Activated CD4-positive, alpha-beta T cell treated with anti-CD3 and anti-CD28 coated beads for 36 hours (primary cell): ENCODE measurements at regions of chr18 and their contacts with region 1.

Region 1: DNA sequence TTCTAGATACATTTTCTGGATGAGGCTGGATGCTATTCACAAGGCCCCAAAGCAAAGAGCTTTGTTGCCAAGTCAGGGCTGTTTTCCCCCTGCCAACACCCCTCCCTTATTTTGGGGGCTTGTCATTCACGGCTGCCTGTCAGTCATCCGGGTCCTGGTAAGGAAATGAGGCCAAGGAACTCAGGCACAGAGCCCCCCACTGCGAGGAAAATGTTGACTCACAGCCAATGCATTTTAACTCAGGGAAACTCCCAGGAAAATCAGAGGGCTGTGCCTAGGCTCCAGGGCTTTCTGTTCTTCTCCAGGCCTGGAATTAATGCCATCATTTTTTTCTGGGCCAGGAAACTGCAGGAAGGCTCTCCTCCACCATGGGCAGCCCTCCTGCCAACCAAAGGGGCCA is 241.1 kb downstream of the SMAD2 start:
- DNase-seq: no peak
- ATAC-seq: no peak
- H3K4me3 Mint-ChIP-seq: no peak overlapping the region
- H3K27ac Mint-ChIP-seq: no peak overlapping the region
- H3K4me1 Mint-ChIP-seq: no peaks in the 10 kb centered on the region
- H3K27me3 Mint-ChIP-seq: peaks cover 6% of the 10 kb centered on the region

Region 2: GRCh38 chr18:47381975-47382570 is 307.3 kb before region 1 on chr18:
- CTCF ChIA-PET with region 1: no interaction called
- POLR2A ChIA-PET with region 1: no interaction called
- intact Hi-C with region 1: loop called in 1 of 2 experiments (anchors 1 kb)
- DNase-seq: no peak
- ATAC-seq: no peak
- H3K4me3 Mint-ChIP-seq: no peak overlapping the region
- H3K27ac Mint-ChIP-seq: no peak overlapping the region
- H3K4me1 Mint-ChIP-seq: no peaks in the 10 kb centered on the region
- H3K27me3 Mint-ChIP-seq: peaks cover 5% of the 10 kb centered on the region

Region 3: DNA sequence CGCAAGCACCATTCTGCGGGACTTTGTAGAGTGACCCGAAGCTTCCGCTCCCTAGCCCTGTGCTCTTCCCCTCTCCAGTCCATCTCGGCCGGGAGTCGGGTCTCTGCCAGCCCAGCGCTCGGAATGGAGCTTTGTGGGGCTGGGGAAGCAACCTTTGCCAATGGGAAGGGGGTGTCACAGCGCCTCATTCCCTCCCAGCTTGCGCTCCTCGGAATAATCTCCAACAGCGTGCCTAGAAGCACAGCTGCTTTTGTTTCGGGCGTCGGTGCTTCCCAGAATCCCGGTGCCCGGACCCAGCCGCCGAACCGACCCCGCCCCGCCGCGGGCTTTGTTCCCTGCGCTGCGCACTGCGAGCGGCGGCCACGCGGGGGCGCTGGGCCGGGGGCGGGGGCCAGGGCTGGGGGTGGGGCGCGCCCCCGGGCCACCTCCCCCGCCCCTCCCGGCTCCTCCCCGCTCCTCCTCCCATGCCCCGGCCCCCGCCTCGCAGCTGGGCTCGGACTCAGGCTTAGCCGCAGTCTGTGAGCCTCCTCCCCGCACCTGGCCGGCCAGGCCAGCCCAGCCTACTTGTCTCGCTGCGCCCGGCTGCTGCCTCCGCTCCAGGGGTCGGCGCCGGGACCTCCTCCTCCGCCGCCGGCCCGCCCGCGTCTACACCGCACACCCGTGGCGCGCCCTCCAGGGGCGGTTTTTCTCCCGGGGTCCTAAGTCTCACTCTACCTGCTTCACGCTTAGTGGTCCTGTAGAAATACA is 318.8 kb after region 1 on chr18:
- CTCF ChIA-PET with region 1: no interaction called
- POLR2A ChIA-PET with region 1: no interaction called
- intact Hi-C with region 1: no loop called
- DNase-seq: peak; percentile 66
- ATAC-seq: peak; percentile 85
- H3K4me3 Mint-ChIP-seq: peak overlapping the region; percentile 55
- H3K27ac Mint-ChIP-seq: no peak overlapping the region
- H3K4me1 Mint-ChIP-seq: peaks cover 2% of the 10 kb centered on the region
- H3K27me3 Mint-ChIP-seq: peaks cover 25% of the 10 kb centered on the region